Transverse colon (tissue), 4 donors: ENCODE measurements at regions of chr7 and their contacts with region 1.

Region 1: DNA sequence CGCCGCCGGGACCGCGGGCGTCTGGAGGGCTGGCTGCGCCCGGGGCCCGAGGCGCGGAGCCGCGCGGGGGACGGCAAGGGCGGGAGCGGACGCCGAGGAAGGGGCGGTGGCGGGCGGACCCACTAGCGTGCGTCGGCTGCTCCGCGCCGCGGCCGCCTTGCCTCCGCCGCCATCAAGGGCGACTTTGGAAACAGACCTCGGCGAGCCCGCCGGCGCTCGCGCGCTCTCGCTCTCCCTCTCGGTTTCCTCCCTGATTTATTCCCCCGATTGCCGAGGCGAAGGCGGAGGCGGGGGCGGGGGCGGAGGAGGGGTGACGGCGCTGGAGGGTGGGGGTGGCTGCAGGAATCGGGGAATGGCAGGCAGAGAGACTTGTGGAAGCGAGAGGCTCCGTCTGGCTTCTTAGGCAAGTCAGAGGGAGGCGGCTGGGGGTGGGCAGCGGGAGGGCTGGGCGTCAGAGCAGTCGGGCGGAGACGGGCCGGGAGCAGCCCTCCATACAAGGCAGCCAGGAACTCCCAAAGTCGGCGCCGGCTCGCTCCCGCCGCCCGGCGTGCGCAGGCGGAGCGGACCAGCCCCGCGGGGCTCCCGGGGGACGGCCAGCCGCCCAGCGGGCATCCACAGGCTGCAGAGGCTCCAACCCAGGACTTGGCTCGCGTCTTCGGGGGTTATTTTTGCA is at the start of gene CACNA2D1:
- DNase-seq: peak; percentile 67
- H3K4me3 ChIP-seq: peak within 1 kb of the TSS; percentile 56 to 68 (median 62)
- H3K27ac ChIP-seq: peak within 1 kb of the TSS; percentile 85 to 91 (median 88)
- H3K4me1 ChIP-seq: peaks cover 0 to 8% (median 5%) of the 10 kb centered on the region in 4 donors
- H3K27me3 ChIP-seq: peaks cover 57% of the 10 kb centered on the region
- CTCF ChIP-seq: no peak
- EP300 ChIP-seq: no peak
- POLR2A ChIP-seq: no peak
- total RNA-seq, gene CACNA2D1: 11.0 to 126 (median 22.9) TPM

Region 2: GRCh38 chr7:82234457-82235049 is 209.1 kb before region 1 on chr7:
- in situ Hi-C with region 1: no loop called
- intact Hi-C with region 1: loop called (anchors 10 kb)
- DNase-seq: no peak
- H3K4me3 ChIP-seq: no peak overlapping the region
- H3K27ac ChIP-seq: no peak overlapping the region
- H3K4me1 ChIP-seq: no peaks in the 10 kb centered on the region
- H3K27me3 ChIP-seq: no peaks in the 10 kb centered on the region
- CTCF ChIP-seq: peak; percentile 33 to 61 (median 52)
- EP300 ChIP-seq: no peak
- POLR2A ChIP-seq: no peak